GM12878 (cell line): ENCODE measurements at regions of chr4 and their contacts with region 1.

Region 1: DNA sequence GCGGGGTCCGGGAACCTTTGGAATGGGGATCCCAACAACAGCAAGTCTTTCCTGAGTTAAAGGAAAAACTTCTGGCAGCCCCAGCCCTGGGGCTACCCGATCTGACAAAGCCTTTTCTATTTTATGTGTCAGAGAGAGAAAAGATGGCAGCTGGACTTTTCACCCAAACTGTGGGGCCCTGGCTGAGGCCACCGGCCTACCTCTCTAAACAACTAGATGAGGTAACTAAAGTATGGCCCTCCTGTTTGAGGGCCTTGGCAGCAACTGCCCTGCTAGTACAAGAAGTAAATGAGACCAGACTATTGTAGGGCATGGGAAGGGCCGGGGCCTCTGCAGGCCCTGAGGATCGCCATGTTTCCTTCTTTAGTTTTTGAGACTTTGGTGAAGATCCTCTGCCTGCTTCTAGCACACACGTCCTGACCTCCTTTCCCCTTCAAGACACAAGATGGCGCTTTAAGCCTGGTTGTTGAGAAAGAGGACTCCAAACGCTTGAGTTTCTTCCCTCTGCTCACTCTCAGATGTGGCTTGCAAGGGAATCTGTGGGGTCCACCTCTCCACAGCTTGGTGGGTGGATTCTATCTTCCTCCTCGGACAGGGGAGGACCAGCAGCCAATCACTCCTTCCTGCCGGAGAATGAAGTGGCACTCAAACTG is 18.5 kb upstream of the DRD5 start:
- DNase-seq: peak; percentile 40
- ATAC-seq: peak; percentile 75
- H3K4me3 ChIP-seq: no peak overlapping the region
- H3K27ac ChIP-seq: no peak overlapping the region
- H3K4me1 ChIP-seq: no peaks in the 10 kb centered on the region
- H3K27me3 ChIP-seq: no peaks in the 10 kb centered on the region
- CTCF ChIP-seq: peak; percentile 69 to 88 (median 75)
- EP300 ChIP-seq: no peak
- POLR2A ChIP-seq: no peak
- RAD21 ChIP-seq: peak; percentile 99

Region 2: GRCh38 chr4:9800848-9801247 is 37.9 kb after region 1 on chr4:
- CTCF ChIA-PET with region 1: interaction called, 6 read pairs
- POLR2A ChIA-PET with region 1: no interaction called
- RAD21 ChIA-PET with region 1: no interaction called
- SMC1A ChIA-PET with region 1: interaction called, 3 read pairs
- in situ Hi-C with region 1: no loop called
- intact Hi-C with region 1: loop called (anchors 5 kb)
- DNase-seq: no peak
- ATAC-seq: peak; percentile 22; the same call in 2 of the 3 replicates
- H3K4me3 ChIP-seq: no peak overlapping the region
- H3K27ac ChIP-seq: no peak overlapping the region
- H3K4me1 ChIP-seq: no peaks in the 10 kb centered on the region
- H3K27me3 ChIP-seq: no peaks in the 10 kb centered on the region
- CTCF ChIP-seq: no peak
- EP300 ChIP-seq: no peak
- POLR2A ChIP-seq: no peak
- RAD21 ChIP-seq: no peak

Region 3: GRCh38 chr4:9845791-9846493 is 83.0 kb after region 1 on chr4:
- CTCF ChIA-PET with region 1: no interaction called
- POLR2A ChIA-PET with region 1: no interaction called
- RAD21 ChIA-PET with region 1: no interaction called
- SMC1A ChIA-PET with region 1: no interaction called
- in situ Hi-C with region 1: no loop called
- intact Hi-C with region 1: no loop called
- DNase-seq: no peak
- ATAC-seq: no peak
- H3K4me3 ChIP-seq: no peak overlapping the region
- H3K27ac ChIP-seq: no peak overlapping the region
- H3K4me1 ChIP-seq: no peaks in the 10 kb centered on the region; the same call in 1 of the 2 replicates
- H3K27me3 ChIP-seq: no peaks in the 10 kb centered on the region
- CTCF ChIP-seq: no peak
- EP300 ChIP-seq: no peak
- POLR2A ChIP-seq: no peak
- RAD21 ChIP-seq: no peak

Region 4: GRCh38 chr4:9898596-9899305 is 135.8 kb after region 1 on chr4:
- CTCF ChIA-PET with region 1: interaction called, 27 read pairs
- POLR2A ChIA-PET with region 1: no interaction called
- RAD21 ChIA-PET with region 1: interaction called, 11 read pairs
- SMC1A ChIA-PET with region 1: interaction called, 13 read pairs
- in situ Hi-C with region 1: no loop called
- intact Hi-C with region 1: loop called (anchors 1 kb)
- DNase-seq: no peak
- ATAC-seq: peak; percentile 72
- H3K4me3 ChIP-seq: no peak overlapping the region
- H3K27ac ChIP-seq: no peak overlapping the region
- H3K4me1 ChIP-seq: peaks cover 3% of the 10 kb centered on the region; the same call in 1 of the 2 replicates
- H3K27me3 ChIP-seq: no peaks in the 10 kb centered on the region
- CTCF ChIP-seq: peak in 2 of 3 experiments; percentile 10 to 62; a peak in 3 of 6 replicates
- EP300 ChIP-seq: no peak
- POLR2A ChIP-seq: no peak
- RAD21 ChIP-seq: peak; percentile 45

Region 5: GRCh38 chr4:10018818-10019461 is 256.0 kb after region 1 on chr4:
- CTCF ChIA-PET with region 1: interaction called, 325 read pairs
- POLR2A ChIA-PET with region 1: no interaction called
- RAD21 ChIA-PET with region 1: interaction called, 185 read pairs
- SMC1A ChIA-PET with region 1: interaction called, 159 read pairs
- in situ Hi-C with region 1: loop called (anchors 5 kb)
- intact Hi-C with region 1: loop called (anchors 1 kb)
- DNase-seq: peak; percentile 64
- ATAC-seq: peak; percentile 97
- H3K4me3 ChIP-seq: peak overlapping the region; percentile 47
- H3K27ac ChIP-seq: peak overlapping the region; percentile 3; the same call in 1 of the 2 replicates
- H3K4me1 ChIP-seq: peaks cover 14% of the 10 kb centered on the region
- H3K27me3 ChIP-seq: no peaks in the 10 kb centered on the region; a peak in 1 of 4 replicates
- CTCF ChIP-seq: peak; percentile 98 to 100 (median 99); a peak in 5 of 6 replicates
- EP300 ChIP-seq: no peak
- POLR2A ChIP-seq: peak; percentile 83
- RAD21 ChIP-seq: peak; percentile 86

Region 6: DNA sequence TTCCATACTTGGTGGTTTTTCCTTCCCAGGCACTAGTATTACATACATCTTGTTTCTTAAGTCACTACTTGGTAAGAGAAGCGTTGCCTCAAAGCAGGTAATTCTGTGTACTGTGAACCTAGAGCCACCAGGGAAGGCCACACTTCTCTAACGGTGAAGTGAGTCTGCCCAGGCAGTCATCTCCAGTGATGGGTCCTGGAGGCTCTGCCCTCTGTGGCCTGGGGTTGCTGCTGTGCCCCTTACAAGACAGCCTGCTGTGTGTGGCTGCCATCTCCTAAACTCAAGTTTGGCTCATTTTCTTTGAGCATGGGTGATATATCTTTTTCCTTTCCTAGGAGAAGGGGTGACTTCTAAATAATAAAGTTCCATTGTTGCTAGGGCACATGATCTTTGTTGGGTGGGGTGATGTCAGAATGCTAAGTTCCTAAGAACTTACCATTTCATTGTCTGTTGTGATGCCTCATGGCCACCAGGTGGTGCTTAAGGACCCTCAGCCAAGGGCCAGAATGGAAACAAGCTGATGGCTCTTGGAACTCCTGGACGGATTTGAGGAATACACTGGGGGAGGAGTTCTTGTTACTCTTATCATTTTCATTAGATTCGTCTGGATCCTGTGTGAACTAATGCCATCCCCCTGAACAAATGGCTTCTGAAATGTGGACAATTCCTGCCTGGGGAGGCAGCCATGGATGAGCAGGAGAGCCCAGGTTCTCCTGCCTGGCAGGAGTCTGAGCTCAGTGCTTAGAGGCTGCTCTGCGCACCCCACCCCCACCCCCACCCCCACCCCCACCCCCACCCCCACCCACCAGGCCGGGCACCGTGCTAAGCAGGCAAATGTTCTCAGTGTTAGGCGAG is 394.8 kb after region 1 on chr4:
- CTCF ChIA-PET with region 1: no interaction called
- POLR2A ChIA-PET with region 1: no interaction called
- RAD21 ChIA-PET with region 1: no interaction called
- SMC1A ChIA-PET with region 1: no interaction called
- in situ Hi-C with region 1: no loop called
- intact Hi-C with region 1: loop called (anchors 10 kb)
- DNase-seq: peak; percentile 9
- ATAC-seq: peak; percentile 89
- H3K4me3 ChIP-seq: no peak overlapping the region
- H3K27ac ChIP-seq: no peak overlapping the region
- H3K4me1 ChIP-seq: no peaks in the 10 kb centered on the region
- H3K27me3 ChIP-seq: no peaks in the 10 kb centered on the region
- CTCF ChIP-seq: peak; percentile 77 to 83 (median 80)
- EP300 ChIP-seq: no peak
- POLR2A ChIP-seq: no peak
- RAD21 ChIP-seq: peak; percentile 88

Region 7: DNA sequence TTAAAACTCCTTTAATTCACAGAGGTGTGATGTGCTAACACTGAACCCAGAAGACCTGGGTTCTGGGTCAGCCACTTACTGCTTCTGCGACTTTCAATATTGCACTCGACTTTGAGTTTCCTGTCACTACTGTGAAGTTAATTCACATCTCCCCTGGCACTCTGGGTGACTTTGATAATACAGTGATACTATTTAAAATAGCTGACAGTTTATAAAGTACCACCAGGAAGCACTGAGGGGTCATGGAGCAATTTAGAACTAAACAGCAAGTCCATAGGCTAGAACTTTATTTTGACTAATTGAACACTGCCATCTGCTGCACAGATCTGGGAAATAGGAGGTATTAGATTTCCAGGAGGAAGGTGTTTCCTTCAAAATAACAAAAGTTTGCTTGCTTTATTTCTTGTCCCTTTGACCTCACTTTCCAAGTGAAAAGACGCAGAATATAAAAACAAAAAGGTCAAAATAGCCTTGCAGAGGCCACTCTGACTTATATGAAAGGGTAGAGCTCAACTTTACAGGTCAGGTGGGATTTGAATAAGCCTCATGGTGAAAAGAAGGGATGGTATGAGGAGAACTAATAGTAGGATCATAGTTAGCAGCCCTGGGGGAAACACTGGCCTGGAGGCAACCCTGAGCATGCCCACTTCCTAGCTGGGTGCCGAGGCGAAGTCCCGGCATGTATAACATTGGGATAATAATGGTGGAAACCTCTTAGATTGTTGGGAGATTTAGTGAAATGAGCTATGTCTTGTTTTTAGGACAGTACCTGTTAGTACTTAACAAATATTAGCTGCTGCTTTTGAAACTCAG is 640.9 kb after region 1 on chr4:
- CTCF ChIA-PET with region 1: no interaction called
- POLR2A ChIA-PET with region 1: no interaction called
- RAD21 ChIA-PET with region 1: no interaction called
- SMC1A ChIA-PET with region 1: no interaction called
- in situ Hi-C with region 1: no loop called
- intact Hi-C with region 1: loop called (anchors 5 kb)
- DNase-seq: no peak
- ATAC-seq: peak; percentile 48; the same call in 1 of the 3 replicates
- H3K4me3 ChIP-seq: no peak overlapping the region
- H3K27ac ChIP-seq: no peak overlapping the region
- H3K4me1 ChIP-seq: no peaks in the 10 kb centered on the region
- H3K27me3 ChIP-seq: no peaks in the 10 kb centered on the region
- CTCF ChIP-seq: peak in 2 of 3 experiments; percentile 38 to 46; a peak in 3 of 6 replicates
- EP300 ChIP-seq: no peak
- POLR2A ChIP-seq: no peak
- RAD21 ChIP-seq: peak; percentile 64

Region 8: GRCh38 chr4:10535912-10536311 is 773.0 kb after region 1 on chr4:
- CTCF ChIA-PET with region 1: no interaction called
- POLR2A ChIA-PET with region 1: no interaction called
- RAD21 ChIA-PET with region 1: no interaction called
- SMC1A ChIA-PET with region 1: no interaction called
- in situ Hi-C with region 1: loop called (anchors 10 kb)
- intact Hi-C with region 1: loop called (anchors 5 kb)
- DNase-seq: peak; percentile 38
- ATAC-seq: peak; percentile 91
- H3K4me3 ChIP-seq: no peak overlapping the region
- H3K27ac ChIP-seq: no peak overlapping the region
- H3K4me1 ChIP-seq: peaks cover 16% of the 10 kb centered on the region
- H3K27me3 ChIP-seq: no peaks in the 10 kb centered on the region
- CTCF ChIP-seq: no peak
- EP300 ChIP-seq: peak in 1 of 2 experiments; percentile 53; a peak in 1 of 4 replicates
- POLR2A ChIP-seq: no peak
- RAD21 ChIP-seq: no peak